ENCODE measurements at regions of chrX and their contacts with region 1.

Region 1: GRCh38 chrX:9902656-9903055 is 64.5 kb upstream of the CLDN34 start:
- DNase-seq: no peak
- ATAC-seq: no peak
- H3K4me3 ChIP-seq: no peak overlapping the region
- H3K27ac ChIP-seq: no peak overlapping the region
- H3K4me1 ChIP-seq: no peaks in the 10 kb centered on the region
- H3K27me3 ChIP-seq: peaks cover 0 to 1% (median 0%) of the 10 kb centered on the region in 3 donors
- CTCF ChIP-seq: no peak

Region 2: GRCh38 chrX:9482408-9482807 is 420.2 kb before region 1 on chrX:
- intact Hi-C with region 1: no loop called
- DNase-seq: no peak
- ATAC-seq: no peak
- H3K4me3 ChIP-seq: no peak overlapping the region
- H3K27ac ChIP-seq: no peak overlapping the region
- H3K4me1 ChIP-seq: peaks cover under 1% of the 10 kb centered on the region
- H3K27me3 ChIP-seq: peaks cover 0 to 8% (median 0%) of the 10 kb centered on the region in 3 donors
- CTCF ChIP-seq: no peak

Region 3: GRCh38 chrX:9977635-9978034 is 75.0 kb after region 1 on chrX:
- intact Hi-C with region 1: loop called in 1 of 2 experiments (anchors 2 kb)
- DNase-seq: no peak
- ATAC-seq: no peak
- H3K4me3 ChIP-seq: no peak overlapping the region
- H3K27ac ChIP-seq: no peak overlapping the region
- H3K4me1 ChIP-seq: no peaks in the 10 kb centered on the region
- H3K27me3 ChIP-seq: peaks cover 0 to 4% (median 0%) of the 10 kb centered on the region in 3 donors
- CTCF ChIP-seq: no peak

Measured in psoas muscle (tissue), 8 donors.